Endothelial cell of umbilical vein (primary cell): ENCODE measurements at regions of chr2 and their contacts with region 1.

Region 1: GRCh38 chr2:206783718-206784117 is 18.3 kb downstream of the FASTKD2 start:
- DNase-seq: no peak
- H3K4me3 ChIP-seq: no peak overlapping the region
- H3K27ac ChIP-seq: no peak overlapping the region
- H3K4me1 ChIP-seq: peaks cover 3% of the 10 kb centered on the region
- H3K27me3 ChIP-seq: no peaks in the 10 kb centered on the region
- CTCF ChIP-seq: peak; percentile 40 to 71
- POLR2A ChIP-seq: no peak

Region 2: GRCh38 chr2:206556357-206556949 is 227.3 kb before region 1 on chr2:
- CTCF ChIA-PET with region 1: interaction called, 4 read pairs
- POLR2A ChIA-PET with region 1: no interaction called
- dilution Hi-C with region 1: no loop called
- intact Hi-C with region 1: loop called (anchors 1 kb)
- DNase-seq: peak; percentile 72
- H3K4me3 ChIP-seq: no peak overlapping the region
- H3K27ac ChIP-seq: no peak overlapping the region
- H3K4me1 ChIP-seq: no peaks in the 10 kb centered on the region
- H3K27me3 ChIP-seq: no peaks in the 10 kb centered on the region
- CTCF ChIP-seq: peak; percentile 30 to 39
- POLR2A ChIP-seq: no peak

Region 3: GRCh38 chr2:206765242-206766056 is 18.3 kb before region 1 on chr2 and contains the starts of genes FASTKD2 and MDH1B:
- CTCF ChIA-PET with region 1: interaction called, 25 read pairs
- POLR2A ChIA-PET with region 1: no interaction called
- dilution Hi-C with region 1: no loop called
- intact Hi-C with region 1: no loop called
- DNase-seq: peak; percentile 99
- H3K4me3 ChIP-seq: peak within 1 kb of the TSS; percentile 76 to 96 (median 80)
- H3K27ac ChIP-seq: peak within 1 kb of the TSS; percentile 89
- H3K4me1 ChIP-seq: peaks cover 8% of the 10 kb centered on the region
- H3K27me3 ChIP-seq: peaks cover 5 to 20% of the 10 kb centered on the region in 2 experiments
- CTCF ChIP-seq: no peak
- POLR2A ChIP-seq: peak; percentile 90
- total RNA-seq, gene FASTKD2: 22.6 and 24.1 TPM in 2 replicates
- total RNA-seq, gene MDH1B: 0.51 TPM in 1 of 2 replicates, not detected in the other